PC-3 (cell line): ENCODE measurements at regions of chr11 and their contacts with region 1.

Region 1: DNA sequence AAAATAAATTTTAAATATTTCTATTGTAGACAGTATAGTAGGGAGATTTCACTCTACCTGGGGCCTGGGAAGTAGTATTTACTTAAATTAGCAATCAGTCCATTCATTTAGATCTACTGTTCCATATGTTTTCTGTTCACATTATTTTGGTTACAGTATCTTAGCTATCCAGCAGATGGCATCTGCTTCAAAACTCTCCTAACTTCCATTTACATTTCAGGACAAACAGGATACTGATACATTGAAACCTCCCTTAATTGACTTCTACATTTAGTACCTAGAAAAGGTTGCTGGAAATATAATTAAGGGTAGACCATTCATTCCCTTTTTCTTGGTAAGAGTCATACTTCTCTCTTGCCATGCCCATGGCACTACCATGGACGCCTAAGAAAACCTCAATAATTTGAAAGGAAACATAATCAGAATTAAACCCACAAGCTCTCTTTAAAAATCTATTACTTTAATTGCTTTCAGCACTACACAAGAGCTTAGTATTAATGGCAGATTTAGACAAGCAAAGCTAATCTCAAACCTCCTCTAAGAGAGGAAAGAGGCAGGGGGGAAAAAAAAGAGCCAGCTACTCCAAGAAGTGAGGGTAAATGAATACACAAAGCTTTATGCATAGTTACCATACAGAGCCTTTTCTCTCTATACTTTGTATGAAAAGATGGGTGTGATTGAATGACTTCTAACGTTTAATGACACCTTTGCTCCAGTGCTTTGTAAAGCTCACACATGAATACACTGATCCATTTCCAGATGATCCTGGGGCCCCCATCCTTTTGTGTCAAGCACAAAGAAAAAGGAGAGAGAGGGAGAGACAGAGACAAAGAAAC is 131.2 kb upstream of the MTMR2 start:
- DNase-seq: peak; percentile 77
- ATAC-seq: peak; percentile 62
- H3K4me3 ChIP-seq: no peak overlapping the region
- H3K27ac ChIP-seq: peak overlapping the region; percentile 54
- H3K4me1 ChIP-seq: peaks cover 45% of the 10 kb centered on the region
- H3K27me3 ChIP-seq: no peaks in the 10 kb centered on the region
- CTCF ChIP-seq: peak; percentile 86

Region 2: GRCh38 chr11:96149743-96150555 is 94.9 kb after region 1 on chr11:
- CTCF ChIA-PET with region 1: no interaction called
- POLR2A ChIA-PET with region 1: interaction called, 3 read pairs
- intact Hi-C with region 1: loop called (anchors 10 kb)
- DNase-seq: peak; percentile 77
- ATAC-seq: peak; percentile 47
- H3K4me3 ChIP-seq: no peak overlapping the region
- H3K27ac ChIP-seq: peak overlapping the region; percentile 88
- H3K4me1 ChIP-seq: peaks cover 52% of the 10 kb centered on the region
- H3K27me3 ChIP-seq: no peaks in the 10 kb centered on the region
- CTCF ChIP-seq: no peak

Region 3: GRCh38 chr11:96215110-96215782 is 160.2 kb after region 1 on chr11:
- CTCF ChIA-PET with region 1: interaction called, 12 read pairs
- POLR2A ChIA-PET with region 1: no interaction called
- intact Hi-C with region 1: loop called (anchors 10 kb)
- DNase-seq: peak; percentile 44
- ATAC-seq: peak; percentile 53
- H3K4me3 ChIP-seq: no peak overlapping the region
- H3K27ac ChIP-seq: peak overlapping the region; percentile 81
- H3K4me1 ChIP-seq: peaks cover 43% of the 10 kb centered on the region
- H3K27me3 ChIP-seq: no peaks in the 10 kb centered on the region
- CTCF ChIP-seq: no peak

Region 4: DNA sequence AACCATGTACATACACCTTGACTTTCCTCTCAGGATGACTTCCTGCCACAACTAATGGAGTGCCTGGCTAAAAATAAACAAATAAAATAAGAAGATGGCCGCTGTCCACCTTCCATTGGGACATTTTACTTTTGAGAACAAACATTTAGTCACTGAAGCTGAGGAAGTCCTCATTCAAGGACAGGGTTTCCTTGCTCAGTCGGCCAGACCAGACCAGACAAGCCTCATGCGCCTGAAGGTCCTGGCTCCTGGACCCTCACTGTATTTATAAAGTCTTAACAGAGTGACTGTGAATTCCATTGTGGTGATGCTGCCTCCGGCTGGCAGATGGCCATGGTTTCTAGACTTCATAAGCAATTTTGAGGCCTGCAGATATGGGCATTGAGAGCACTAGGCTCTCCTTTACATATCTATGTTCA is 173.4 kb after region 1 on chr11:
- CTCF ChIA-PET with region 1: no interaction called
- POLR2A ChIA-PET with region 1: interaction called, 3 read pairs
- intact Hi-C with region 1: loop called (anchors 10 kb)
- DNase-seq: peak; percentile 98
- ATAC-seq: peak; percentile 98
- H3K4me3 ChIP-seq: no peak overlapping the region
- H3K27ac ChIP-seq: peak overlapping the region; percentile 82
- H3K4me1 ChIP-seq: peaks cover 31% of the 10 kb centered on the region
- H3K27me3 ChIP-seq: no peaks in the 10 kb centered on the region
- CTCF ChIP-seq: no peak

Region 5: GRCh38 chr11:96635655-96636054 is 580.6 kb after region 1 on chr11:
- CTCF ChIA-PET with region 1: no interaction called
- POLR2A ChIA-PET with region 1: no interaction called
- intact Hi-C with region 1: no loop called
- DNase-seq: no peak
- ATAC-seq: no peak
- H3K4me3 ChIP-seq: no peak overlapping the region
- H3K27ac ChIP-seq: no peak overlapping the region
- H3K4me1 ChIP-seq: no peaks in the 10 kb centered on the region
- H3K27me3 ChIP-seq: peaks cover 3% of the 10 kb centered on the region; the same call in 1 of the 2 replicates
- CTCF ChIP-seq: no peak